Activated T-helper 1 cell treated with anti-CD3 and anti-CD28 coated beads, Interleukin-12 subunit alpha, Interleukin-12 subunit beta, Interleukin-2, Interleukin-4 antibody, amounts not matched to agents 30 ng/mL and 10 ng/mL and 1 ng/mL, durations not matched to agents 14 hours and 24 hours and 36 hours (primary cell): ENCODE measurements at regions of chr2 and their contacts with region 1.

Region 1: DNA sequence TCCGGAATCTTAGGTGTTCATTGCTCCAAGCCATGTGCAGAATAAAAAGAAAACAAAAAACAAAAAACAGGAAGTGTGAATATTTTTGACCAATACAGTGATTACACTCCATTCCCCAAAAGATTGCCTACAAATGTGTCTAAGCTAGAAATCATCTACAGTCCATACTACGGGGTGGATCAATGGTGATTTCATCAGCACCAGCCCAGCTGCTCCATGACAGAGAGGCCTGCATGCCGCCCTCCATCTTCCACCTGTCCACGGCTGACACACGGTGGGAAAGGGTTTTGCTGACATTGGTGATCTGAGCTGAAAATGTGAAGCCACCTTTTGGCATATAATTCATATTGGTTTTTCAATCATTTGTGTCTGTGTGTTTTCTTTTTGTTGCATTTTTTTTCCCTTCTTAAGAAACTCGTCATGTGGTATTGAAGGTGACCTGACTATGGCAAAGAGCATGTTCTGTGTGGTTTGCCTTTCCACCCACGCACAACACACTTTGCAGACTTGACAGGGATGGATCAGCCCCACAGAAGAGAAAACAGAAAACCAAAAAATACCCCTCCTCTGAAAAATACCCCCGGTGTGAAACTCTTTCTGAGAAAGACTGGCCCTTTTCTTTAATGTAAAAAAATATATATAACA is 533.1 kb downstream of the RNF144A start:
- DNase-seq: peak; percentile 65
- H3K4me3 Mint-ChIP-seq: peak overlapping the region; percentile 9
- H3K27ac Mint-ChIP-seq: peak overlapping the region; percentile 98
- H3K4me1 Mint-ChIP-seq: peaks cover 90% of the 10 kb centered on the region
- H3K27me3 Mint-ChIP-seq: no peaks in the 10 kb centered on the region

Region 2: DNA sequence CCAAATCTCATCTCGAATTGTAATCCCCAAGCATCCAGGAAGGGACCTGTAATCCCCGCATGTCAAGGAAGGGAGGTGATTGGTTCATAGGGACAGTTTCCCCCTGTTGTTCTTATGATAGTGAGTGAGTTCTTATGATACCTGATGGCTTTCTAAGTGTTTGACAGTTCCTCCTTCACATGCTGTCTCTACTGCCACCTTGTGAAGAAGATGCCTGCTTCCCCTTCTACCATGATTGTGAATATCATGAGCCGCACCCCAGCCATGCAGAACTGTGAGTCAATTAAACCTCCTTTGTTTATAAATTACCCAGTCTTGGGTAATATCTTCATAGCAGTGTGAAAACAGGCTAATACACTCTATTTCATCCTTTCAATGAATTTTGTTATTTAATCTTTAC is 86.4 kb before region 1 on chr2:
- intact Hi-C with region 1: no loop called
- DNase-seq: no peak
- H3K4me3 Mint-ChIP-seq: no peak overlapping the region
- H3K27ac Mint-ChIP-seq: no peak overlapping the region
- H3K4me1 Mint-ChIP-seq: no peaks in the 10 kb centered on the region
- H3K27me3 Mint-ChIP-seq: peaks cover 4% of the 10 kb centered on the region

Region 3: GRCh38 chr2:7467782-7468447 is 17.6 kb after region 1 on chr2:
- intact Hi-C with region 1: loop called (anchors 1 kb)
- DNase-seq: peak; percentile 44
- H3K4me3 Mint-ChIP-seq: peak overlapping the region; percentile 50
- H3K27ac Mint-ChIP-seq: peak overlapping the region; percentile 91
- H3K4me1 Mint-ChIP-seq: peaks cover 51% of the 10 kb centered on the region
- H3K27me3 Mint-ChIP-seq: no peaks in the 10 kb centered on the region

Region 4: DNA sequence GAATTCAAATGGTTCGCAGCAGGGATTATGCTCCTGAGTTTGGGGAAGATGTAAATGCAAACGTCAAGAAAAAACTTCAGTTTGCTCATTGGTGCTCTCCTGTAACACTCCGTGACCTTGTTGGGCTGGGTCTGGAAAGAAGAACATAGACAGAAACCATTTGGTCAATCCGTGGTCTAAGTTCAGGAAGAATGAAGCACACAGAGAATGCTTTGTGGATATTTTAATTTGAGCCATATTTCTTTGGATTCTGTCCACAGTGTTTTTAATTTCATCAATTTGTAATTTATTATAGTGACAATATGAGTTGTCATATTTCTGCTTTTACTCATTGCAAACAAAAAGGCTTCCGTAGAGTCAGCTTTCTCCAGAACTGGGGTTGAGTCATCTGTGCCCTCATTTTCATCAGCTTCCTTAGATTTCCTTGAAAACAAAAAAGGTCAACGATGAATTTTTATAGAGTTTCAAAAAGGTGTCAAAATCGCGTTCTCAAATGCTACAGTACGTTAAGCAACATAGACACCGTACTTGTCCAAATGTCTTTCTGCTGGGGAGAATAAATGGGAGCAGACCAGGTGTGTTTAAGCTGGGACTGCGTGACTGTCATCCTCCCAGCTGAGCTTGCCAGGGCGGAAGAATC is 73.3 kb after region 1 on chr2:
- intact Hi-C with region 1: loop called (anchors 1 kb)
- DNase-seq: no peak
- H3K4me3 Mint-ChIP-seq: peak overlapping the region; percentile 2
- H3K27ac Mint-ChIP-seq: peak overlapping the region; percentile 90
- H3K4me1 Mint-ChIP-seq: peaks cover 77% of the 10 kb centered on the region
- H3K27me3 Mint-ChIP-seq: no peaks in the 10 kb centered on the region

Region 5: GRCh38 chr2:7530001-7530400 is 79.7 kb after region 1 on chr2:
- intact Hi-C with region 1: loop called (anchors 1 kb)
- DNase-seq: no peak
- H3K4me3 Mint-ChIP-seq: no peak overlapping the region
- H3K27ac Mint-ChIP-seq: peak overlapping the region; percentile 71
- H3K4me1 Mint-ChIP-seq: peaks cover 64% of the 10 kb centered on the region
- H3K27me3 Mint-ChIP-seq: no peaks in the 10 kb centered on the region

Region 6: DNA sequence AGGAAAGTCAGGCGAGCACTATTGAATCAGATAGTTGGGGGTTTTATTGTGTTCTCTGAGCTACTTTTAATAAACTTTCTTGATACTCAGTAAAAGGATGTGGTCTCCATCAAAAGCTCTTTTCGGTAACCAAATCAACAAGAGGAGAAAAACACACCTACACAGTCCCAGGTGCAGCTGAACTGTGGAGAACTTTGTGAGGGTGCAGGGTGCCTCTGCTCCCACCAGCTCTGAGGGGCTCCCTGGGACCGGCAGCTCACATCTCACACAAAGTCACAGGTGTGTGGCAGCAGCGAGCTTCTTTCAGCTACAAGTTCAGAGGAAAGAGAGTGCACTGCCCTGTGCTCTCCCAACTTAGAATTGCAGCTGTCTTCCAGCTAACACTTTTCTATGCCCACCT is 117.3 kb after region 1 on chr2:
- intact Hi-C with region 1: loop called (anchors 1 kb)
- DNase-seq: peak; percentile 47
- H3K4me3 Mint-ChIP-seq: peak overlapping the region; percentile 25
- H3K27ac Mint-ChIP-seq: peak overlapping the region; percentile 90
- H3K4me1 Mint-ChIP-seq: peaks cover 59% of the 10 kb centered on the region
- H3K27me3 Mint-ChIP-seq: no peaks in the 10 kb centered on the region

Region 7: GRCh38 chr2:7588295-7588694 is 138.0 kb after region 1 on chr2:
- intact Hi-C with region 1: loop called (anchors 1 kb)
- DNase-seq: no peak
- H3K4me3 Mint-ChIP-seq: peak overlapping the region; percentile 28
- H3K27ac Mint-ChIP-seq: peak overlapping the region; percentile 61
- H3K4me1 Mint-ChIP-seq: peaks cover 37% of the 10 kb centered on the region
- H3K27me3 Mint-ChIP-seq: no peaks in the 10 kb centered on the region

Region 8: DNA sequence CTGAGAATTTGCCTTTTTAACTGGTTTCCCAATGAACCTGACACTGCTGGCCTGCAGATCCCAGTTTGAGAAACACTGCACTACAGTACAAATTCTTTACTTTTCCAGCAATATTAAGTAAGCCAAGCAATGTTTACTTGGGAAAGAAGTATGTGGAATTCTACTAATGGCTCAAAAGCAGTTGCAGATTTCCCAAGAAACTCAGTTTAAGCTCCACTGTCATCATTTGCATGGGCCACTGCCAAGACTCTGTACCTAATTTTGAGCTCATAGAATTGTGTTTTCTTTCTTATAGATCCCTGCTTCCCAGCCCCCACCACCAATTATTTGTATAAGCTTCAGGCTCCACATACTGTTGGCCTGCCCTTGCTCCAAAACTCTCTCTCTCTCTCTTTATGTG is 143.1 kb after region 1 on chr2:
- intact Hi-C with region 1: loop called (anchors 1 kb)
- DNase-seq: no peak
- H3K4me3 Mint-ChIP-seq: no peak overlapping the region
- H3K27ac Mint-ChIP-seq: no peak overlapping the region
- H3K4me1 Mint-ChIP-seq: peaks cover 27% of the 10 kb centered on the region
- H3K27me3 Mint-ChIP-seq: no peaks in the 10 kb centered on the region